Ovary (tissue), 10 donors: ENCODE measurements at regions of chr14 and their contacts with region 1.

Region 1: DNA sequence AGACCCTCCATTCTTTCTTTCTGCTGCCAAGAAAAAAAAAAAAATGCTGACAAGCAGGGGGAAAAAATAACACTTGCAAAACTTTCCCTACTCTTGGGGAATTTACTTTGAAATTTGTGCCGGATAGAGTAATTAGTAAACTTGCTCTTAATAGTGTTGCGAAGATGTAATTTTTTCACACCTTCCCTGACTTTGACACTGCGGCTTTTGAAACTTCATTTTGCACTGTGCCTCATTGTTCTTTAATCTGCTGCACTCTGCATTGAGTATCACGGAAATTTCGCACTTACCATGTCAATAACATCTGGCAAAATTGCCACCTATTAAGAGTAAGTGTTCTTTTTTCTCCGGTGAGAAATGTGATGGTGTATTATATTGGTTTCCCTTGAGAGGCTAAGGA is 596.1 kb downstream of the VRK1 start:
- DNase-seq: no peak
- H3K4me3 ChIP-seq: no peak overlapping the region
- H3K27ac ChIP-seq: no peak overlapping the region
- H3K4me1 ChIP-seq: no peaks in the 10 kb centered on the region
- H3K27me3 ChIP-seq: no peaks in the 10 kb centered on the region
- CTCF ChIP-seq: no peak
- EP300 ChIP-seq: no peak
- POLR2A ChIP-seq: no peak

Region 2: DNA sequence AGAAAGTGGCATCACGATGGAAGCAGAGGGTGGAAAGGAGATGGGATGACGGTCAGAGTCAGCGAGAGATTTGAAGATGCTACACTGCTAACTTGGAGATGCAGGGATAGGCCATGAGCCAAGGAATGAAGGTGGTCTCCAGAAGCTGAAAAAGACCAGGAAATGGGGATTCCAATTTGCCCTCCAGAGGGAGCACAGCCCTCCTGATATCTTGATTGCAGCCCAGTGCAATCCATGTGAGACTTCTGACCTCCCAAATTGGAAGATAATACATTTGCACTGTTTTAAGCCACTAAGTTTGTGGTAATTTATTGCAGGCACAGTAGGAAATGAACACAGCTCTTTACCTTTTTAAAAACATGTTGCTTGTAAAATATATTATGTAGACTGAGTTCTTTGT is 46.6 kb before region 1 on chr14:
- intact Hi-C with region 1: loop called in 1 of 4 experiments (anchors 1 kb)
- DNase-seq: no peak
- H3K4me3 ChIP-seq: no peak overlapping the region
- H3K27ac ChIP-seq: no peak overlapping the region
- H3K4me1 ChIP-seq: no peaks in the 10 kb centered on the region
- H3K27me3 ChIP-seq: no peaks in the 10 kb centered on the region
- CTCF ChIP-seq: no peak
- EP300 ChIP-seq: no peak
- POLR2A ChIP-seq: no peak